ENCODE measurements at regions of chr15 and their contacts with region 1.

Region 1: GRCh38 chr15:52615284-52615683 is 46.5 kb upstream of the ARPP19 start:
- DNase-seq: no peak
- ATAC-seq: no peak
- H3K4me3 ChIP-seq: no peak overlapping the region
- H3K27ac ChIP-seq: peak overlapping the region in 1 of 4 donors; percentile 41
- H3K4me1 ChIP-seq: peaks cover 0 to 14% of the 10 kb centered on the region in 2 donors
- H3K27me3 ChIP-seq: no peaks in the 10 kb centered on the region
- CTCF ChIP-seq: no peak
- POLR2A ChIP-seq: no peak

Region 2: DNA sequence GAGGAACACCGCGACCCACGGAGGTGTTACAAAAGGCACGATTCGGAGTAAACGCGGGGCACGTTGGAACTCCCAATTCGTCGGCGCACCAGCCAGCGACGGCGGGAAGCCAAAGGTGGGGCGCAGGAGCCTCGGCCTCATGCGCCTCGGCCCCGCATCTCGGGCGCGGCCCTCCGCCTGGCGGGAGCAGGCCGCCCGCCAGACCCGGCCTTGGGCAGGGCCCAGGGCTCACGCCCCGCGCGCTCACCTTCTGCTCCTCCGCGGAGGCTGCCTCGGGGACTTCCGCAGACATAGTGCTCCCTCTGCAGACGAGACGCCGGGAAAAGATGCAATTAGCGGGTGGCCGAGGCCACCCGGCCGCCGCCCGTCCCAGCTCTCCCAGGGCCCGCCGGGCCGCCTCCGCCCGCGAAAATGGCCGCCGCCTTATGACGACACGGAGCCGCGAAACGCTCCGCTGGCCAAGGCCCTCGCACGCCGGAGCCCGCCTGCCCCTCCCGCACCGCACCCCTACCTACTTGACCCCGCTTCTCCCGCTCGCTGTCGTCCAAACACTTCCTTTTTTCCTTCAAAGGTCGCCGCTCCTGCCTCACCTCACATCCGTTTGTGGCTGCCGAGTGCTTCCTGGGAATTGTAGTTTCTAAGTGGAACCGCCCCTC is 46.6 kb before region 1 on chr15 and contains the start of gene ARPP19:
- in situ Hi-C with region 1: no loop called
- intact Hi-C with region 1: no loop called
- DNase-seq: peak; percentile 93 to 96
- ATAC-seq: peak; percentile 85 to 87
- H3K4me3 ChIP-seq: peak within 1 kb of the TSS; percentile 58 to 87 (median 75)
- H3K27ac ChIP-seq: peak within 1 kb of the TSS; percentile 86 to 97 (median 92)
- H3K4me1 ChIP-seq: peaks cover 25 to 29% of the 10 kb centered on the region in 2 donors
- H3K27me3 ChIP-seq: no peaks in the 10 kb centered on the region
- CTCF ChIP-seq: peak in 3 of 5 experiments; percentile 11 to 35 (median 17)
- POLR2A ChIP-seq: peak; percentile 93 to 97
- total RNA-seq, gene ARPP19: 153 to 428 (median 207) TPM

Region 3: GRCh38 chr15:52642386-52643361 is 27.4 kb after region 1 on chr15:
- in situ Hi-C with region 1: no loop called
- intact Hi-C with region 1: no loop called
- DNase-seq: no peak
- ATAC-seq: peak in 1 of 2 donors; percentile 7
- H3K4me3 ChIP-seq: no peak overlapping the region
- H3K27ac ChIP-seq: peak overlapping the region; percentile 79 to 89 (median 82)
- H3K4me1 ChIP-seq: peaks cover 41 to 61% of the 10 kb centered on the region in 2 donors
- H3K27me3 ChIP-seq: no peaks in the 10 kb centered on the region
- CTCF ChIP-seq: no peak
- POLR2A ChIP-seq: no peak

Region 4: GRCh38 chr15:52661909-52662308 is 46.6 kb after region 1 on chr15:
- in situ Hi-C with region 1: loop called in 1 of 4 experiments (anchors 5 kb)
- intact Hi-C with region 1: no loop called
- DNase-seq: no peak
- ATAC-seq: no peak
- H3K4me3 ChIP-seq: no peak overlapping the region
- H3K27ac ChIP-seq: peak overlapping the region in 3 of 4 donors; percentile 79 to 89 (median 81)
- H3K4me1 ChIP-seq: peaks cover 55 to 89% of the 10 kb centered on the region in 2 donors
- H3K27me3 ChIP-seq: no peaks in the 10 kb centered on the region
- CTCF ChIP-seq: no peak
- POLR2A ChIP-seq: no peak

Measured in gastrocnemius medialis (tissue), 4 donors.